ENCODE measurements at regions of chr17 and their contacts with region 1.

Region 1: GRCh38 chr17:57604771-57605674 is 140.1 kb downstream of the CCDC182 start:
- DNase-seq: no peak
- ATAC-seq: no peak
- H3K4me3 ChIP-seq: no peak overlapping the region
- H3K27ac ChIP-seq: no peak overlapping the region
- H3K4me1 ChIP-seq: peaks cover 15% of the 10 kb centered on the region
- H3K27me3 ChIP-seq: no peaks in the 10 kb centered on the region
- CTCF ChIP-seq: no peak

Region 2: GRCh38 chr17:58189436-58190146 is 584.6 kb after region 1 on chr17:
- CTCF ChIA-PET with region 1: no interaction called
- POLR2A ChIA-PET with region 1: no interaction called
- intact Hi-C with region 1: loop called (anchors 10 kb)
- DNase-seq: peak; percentile 98
- ATAC-seq: peak; percentile 99
- H3K4me3 ChIP-seq: no peak overlapping the region
- H3K27ac ChIP-seq: no peak overlapping the region
- H3K4me1 ChIP-seq: peaks cover 14% of the 10 kb centered on the region
- H3K27me3 ChIP-seq: peaks cover 8% of the 10 kb centered on the region; the same call in 1 of the 2 replicates
- CTCF ChIP-seq: no peak